ENCODE measurements at regions of chr3 and their contacts with region 1.

Region 1: GRCh38 chr3:129120254-129121004 is 1.2 kb downstream of the RAB43 start:
- DNase-seq: peak; percentile 97
- H3K4me3 ChIP-seq: peak overlapping the region; percentile 74
- H3K27ac ChIP-seq: peak overlapping the region; percentile 92
- H3K4me1 ChIP-seq: peaks cover 65% of the 10 kb centered on the region
- CTCF ChIP-seq: no peak

Region 2: DNA sequence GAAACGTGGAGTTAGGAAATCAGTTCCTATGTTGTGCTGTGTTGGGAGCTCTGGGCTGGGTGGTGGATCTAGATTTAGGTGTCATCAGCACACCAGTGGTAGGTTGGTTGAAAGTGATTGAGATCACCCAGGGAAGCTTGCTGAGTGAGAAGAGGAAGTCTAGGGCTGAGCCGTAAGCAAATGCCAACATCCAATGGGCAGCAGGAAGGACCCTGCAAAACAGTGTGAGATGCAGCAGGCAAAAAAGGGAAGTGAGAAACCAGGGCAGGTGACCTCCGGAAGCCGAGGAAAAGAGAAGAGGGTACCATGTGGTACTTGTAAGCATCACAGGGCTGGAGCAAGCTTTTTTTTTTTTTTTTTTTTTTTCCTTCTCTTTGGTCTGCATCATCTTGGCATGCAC is 113.1 kb after region 1 on chr3:
- CTCF ChIA-PET with region 1: no interaction called
- POLR2A ChIA-PET with region 1: interaction called, 5 read pairs
- intact Hi-C with region 1: loop called (anchors 5 kb)
- DNase-seq: peak; percentile 98
- H3K4me3 ChIP-seq: peak overlapping the region; percentile 45
- H3K27ac ChIP-seq: peak overlapping the region; percentile 86
- H3K4me1 ChIP-seq: peaks cover 65% of the 10 kb centered on the region
- CTCF ChIP-seq: no peak